CD4-positive, alpha-beta T cell (primary cell): ENCODE measurements at regions of chr6 and their contacts with region 1.

Region 1: GRCh38 chr6:4135665-4136353 is 434 bp upstream of the ECI2 start:
- DNase-seq: peak; percentile 90 to 99 (median 94)
- ATAC-seq: peak; percentile 87
- H3K4me3 ChIP-seq: peak overlapping the region; percentile 82
- H3K4me3 Mint-ChIP-seq: peak overlapping the region; percentile 86
- H3K27ac ChIP-seq: peak overlapping the region; percentile 47 to 62
- H3K27ac Mint-ChIP-seq: peak overlapping the region; percentile 97
- H3K4me1 ChIP-seq: peaks cover 22% of the 10 kb centered on the region
- H3K4me1 Mint-ChIP-seq: peaks cover 50% of the 10 kb centered on the region
- H3K27me3 ChIP-seq: no peaks in the 10 kb centered on the region
- H3K27me3 Mint-ChIP-seq: no peaks in the 10 kb centered on the region
- CTCF ChIP-seq: no peak

Region 2: GRCh38 chr6:2245094-2245876 is 1890.5 kb before region 1 on chr6 and contains the start of gene GMDS:
- CTCF ChIA-PET with region 1: no interaction called
- POLR2A ChIA-PET with region 1: no interaction called
- intact Hi-C with region 1: loop called in 1 of 2 experiments (anchors 10 kb)
- DNase-seq: peak; percentile 60 to 95 (median 78)
- ATAC-seq: peak; percentile 88
- H3K4me3 ChIP-seq: peak within 1 kb of the TSS; percentile 97
- H3K4me3 Mint-ChIP-seq: peak within 1 kb of the TSS; percentile 94
- H3K27ac ChIP-seq: peak within 1 kb of the TSS; percentile 50 to 88
- H3K27ac Mint-ChIP-seq: peak within 1 kb of the TSS; percentile 96
- H3K4me1 ChIP-seq: peaks cover 29% of the 10 kb centered on the region
- H3K4me1 Mint-ChIP-seq: peaks cover 69% of the 10 kb centered on the region
- H3K27me3 ChIP-seq: no peaks in the 10 kb centered on the region
- H3K27me3 Mint-ChIP-seq: no peaks in the 10 kb centered on the region
- CTCF ChIP-seq: no peak
- total RNA-seq, gene GMDS: 13.9 to 16.4 TPM

Region 3: DNA sequence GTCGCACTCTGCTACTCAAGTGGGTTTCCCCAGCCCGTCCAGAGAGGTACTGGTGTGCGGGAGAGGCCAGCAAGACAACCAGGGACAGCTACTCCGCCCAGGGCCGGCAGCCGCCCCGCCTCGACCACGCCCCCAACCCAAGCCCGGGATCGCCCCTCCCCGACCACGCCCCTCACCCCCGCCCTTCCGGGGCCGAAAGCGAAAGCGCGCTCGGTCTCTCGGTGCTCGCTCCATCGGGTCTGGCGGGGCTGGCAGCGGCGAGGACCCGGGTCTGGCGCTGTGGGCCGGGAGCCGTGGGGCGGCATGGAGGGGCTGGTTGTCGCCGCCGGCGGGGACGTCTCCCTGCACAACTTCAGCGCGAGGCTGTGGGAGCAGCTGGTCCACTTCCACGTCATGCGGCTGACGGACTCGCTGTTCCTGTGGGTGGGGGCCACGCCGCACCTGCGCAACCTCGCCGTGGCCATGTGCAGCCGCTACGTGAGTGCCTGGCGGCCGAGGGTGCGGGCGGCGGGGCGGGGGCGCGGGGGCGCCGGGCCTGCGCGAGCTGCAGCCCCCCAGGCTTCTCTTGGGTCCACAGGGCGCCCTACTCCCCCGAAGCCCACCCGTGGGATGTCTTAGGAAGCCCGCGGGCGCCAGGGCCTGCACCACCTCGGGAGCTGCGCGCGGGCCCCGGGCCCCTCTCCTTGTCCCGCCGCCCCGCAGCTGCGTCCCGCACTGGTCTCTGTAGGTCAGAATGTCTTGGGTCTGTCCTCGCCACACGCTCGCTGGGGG is 876.9 kb before region 1 on chr6 and contains the start of gene PSMG4:
- CTCF ChIA-PET with region 1: no interaction called
- POLR2A ChIA-PET with region 1: interaction called, 3 read pairs
- intact Hi-C with region 1: loop called (anchors 2 to 10 kb)
- DNase-seq: peak; percentile 83 to 96 (median 92)
- ATAC-seq: peak; percentile 74
- H3K4me3 ChIP-seq: peak within 1 kb of the TSS; percentile 80
- H3K4me3 Mint-ChIP-seq: peak within 1 kb of the TSS; percentile 96
- H3K27ac ChIP-seq: peak within 1 kb of the TSS in 1 of 2 donors; percentile 50
- H3K27ac Mint-ChIP-seq: peak within 1 kb of the TSS; percentile 92
- H3K4me1 ChIP-seq: peaks cover 45% of the 10 kb centered on the region
- H3K4me1 Mint-ChIP-seq: peaks cover 42% of the 10 kb centered on the region
- H3K27me3 ChIP-seq: no peaks in the 10 kb centered on the region
- H3K27me3 Mint-ChIP-seq: no peaks in the 10 kb centered on the region
- CTCF ChIP-seq: no peak
- total RNA-seq, gene PSMG4: 12.3 to 12.8 TPM

Region 4: GRCh38 chr6:3356056-3356761 is 779.6 kb before region 1 on chr6:
- CTCF ChIA-PET with region 1: no interaction called
- POLR2A ChIA-PET with region 1: no interaction called
- intact Hi-C with region 1: loop called (anchors 5 to 10 kb)
- DNase-seq: peak; percentile 36 to 87 (median 58)
- ATAC-seq: peak; percentile 78
- H3K4me3 ChIP-seq: peak overlapping the region; percentile 50
- H3K4me3 Mint-ChIP-seq: peak overlapping the region; percentile 85
- H3K27ac ChIP-seq: peak overlapping the region; percentile 67 to 71
- H3K27ac Mint-ChIP-seq: peak overlapping the region; percentile 94
- H3K4me1 ChIP-seq: peaks cover 33% of the 10 kb centered on the region
- H3K4me1 Mint-ChIP-seq: peaks cover 47% of the 10 kb centered on the region
- H3K27me3 ChIP-seq: no peaks in the 10 kb centered on the region
- H3K27me3 Mint-ChIP-seq: no peaks in the 10 kb centered on the region
- CTCF ChIP-seq: no peak

Region 5: DNA sequence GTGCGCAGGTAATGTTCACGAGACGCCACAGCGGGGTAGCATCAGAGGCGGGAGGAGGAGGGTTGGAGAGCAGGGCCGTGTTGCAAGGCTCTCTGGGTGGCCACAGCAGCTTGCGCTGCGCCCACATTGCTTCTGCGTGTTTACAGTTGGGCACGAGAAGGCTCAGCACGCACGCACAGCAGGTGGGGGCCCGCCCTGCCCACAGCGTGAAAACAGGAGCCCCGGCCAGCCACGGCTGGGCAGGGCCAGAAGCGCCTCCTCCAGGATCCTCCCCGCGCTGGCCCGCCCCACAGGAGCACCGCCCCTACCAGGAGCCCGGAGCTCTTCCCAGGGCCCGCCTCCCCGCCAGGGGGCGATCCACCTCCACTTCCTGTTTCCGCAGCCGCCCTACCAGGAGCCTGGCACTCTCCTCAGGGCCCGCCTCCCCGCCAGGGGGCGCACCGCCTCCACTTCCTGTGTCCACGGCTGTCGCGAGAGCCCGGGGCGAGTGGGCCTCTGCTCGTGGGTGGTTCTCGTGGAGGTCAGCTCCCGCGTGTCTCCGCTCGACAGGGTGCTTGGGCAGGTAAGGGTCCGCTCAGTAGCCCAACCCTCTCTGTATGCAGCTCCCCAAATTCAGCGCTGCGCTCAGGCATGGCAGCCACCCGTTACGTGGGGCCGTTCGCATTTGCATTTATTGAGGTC is 286.7 kb before region 1 on chr6 and contains the start of gene FAM50B:
- CTCF ChIA-PET with region 1: interaction called, 3 read pairs
- POLR2A ChIA-PET with region 1: interaction called, 12 read pairs
- intact Hi-C with region 1: loop called in 1 of 2 experiments (anchors 10 kb)
- DNase-seq: peak; percentile 84 to 96 (median 91)
- ATAC-seq: peak; percentile 94
- H3K4me3 ChIP-seq: peak within 1 kb of the TSS; percentile 74
- H3K4me3 Mint-ChIP-seq: peak within 1 kb of the TSS; percentile 78
- H3K27ac ChIP-seq: peak within 1 kb of the TSS in 1 of 2 donors; percentile 58
- H3K27ac Mint-ChIP-seq: peak within 1 kb of the TSS; percentile 83
- H3K4me1 ChIP-seq: peaks cover 34% of the 10 kb centered on the region
- H3K4me1 Mint-ChIP-seq: peaks cover 20% of the 10 kb centered on the region
- H3K27me3 ChIP-seq: no peaks in the 10 kb centered on the region
- H3K27me3 Mint-ChIP-seq: no peaks in the 10 kb centered on the region
- CTCF ChIP-seq: peak; percentile 89
- total RNA-seq, gene FAM50B: 2.7 to 2.8 TPM

Region 6: GRCh38 chr6:4155848-4156466 is 20.1 kb after region 1 on chr6:
- CTCF ChIA-PET with region 1: interaction called, 25 read pairs
- POLR2A ChIA-PET with region 1: interaction called, 4 read pairs
- intact Hi-C with region 1: loop called in 1 of 2 experiments (anchors 2 kb)
- DNase-seq: peak; percentile 57 to 91 (median 72)
- ATAC-seq: peak; percentile 99
- H3K4me3 ChIP-seq: no peak overlapping the region
- H3K4me3 Mint-ChIP-seq: no peak overlapping the region
- H3K27ac ChIP-seq: no peak overlapping the region
- H3K27ac Mint-ChIP-seq: no peak overlapping the region
- H3K4me1 ChIP-seq: no peaks in the 10 kb centered on the region
- H3K4me1 Mint-ChIP-seq: peaks cover 5% of the 10 kb centered on the region
- H3K27me3 ChIP-seq: no peaks in the 10 kb centered on the region
- H3K27me3 Mint-ChIP-seq: peaks cover 15% of the 10 kb centered on the region
- CTCF ChIP-seq: peak; percentile 86

Region 7: DNA sequence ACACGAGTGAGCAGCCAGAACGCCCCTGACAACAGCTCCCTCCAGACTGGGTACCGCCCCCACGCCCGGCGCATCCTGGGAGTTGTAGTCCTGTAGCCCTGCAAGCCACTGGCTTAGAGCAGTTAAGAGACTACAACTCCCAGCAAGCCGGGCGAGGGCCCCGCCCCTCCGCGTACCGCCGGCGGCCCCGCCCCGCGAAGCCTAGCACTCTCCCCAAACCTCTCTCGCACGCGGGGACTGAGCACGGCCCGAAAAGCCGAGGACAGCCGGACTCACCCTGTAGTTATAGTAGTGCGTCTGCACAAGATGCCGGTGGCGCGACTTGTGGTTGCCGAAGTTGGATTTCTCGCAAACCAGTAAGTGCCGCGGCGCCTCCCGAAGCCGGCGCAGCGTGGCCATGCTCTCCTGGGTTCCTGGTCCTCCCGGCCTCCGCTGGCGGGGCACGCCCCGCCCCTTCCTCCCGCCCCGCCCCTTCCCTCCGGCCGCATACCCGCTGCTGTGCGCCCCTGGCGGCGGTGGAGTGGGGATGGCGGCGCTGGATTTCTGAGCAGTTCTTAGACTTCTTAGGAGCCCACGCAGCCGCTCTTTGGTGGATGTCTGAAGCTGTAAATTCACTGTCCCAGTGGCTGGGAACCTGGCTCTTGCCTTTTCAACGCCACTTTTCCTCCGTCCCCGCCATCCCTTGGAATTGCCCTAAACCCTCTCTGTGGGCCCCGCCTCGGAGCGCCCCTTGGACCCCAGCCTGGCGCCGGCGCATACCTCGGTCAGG is 868.0 kb after region 1 on chr6 and contains the start of gene RPP40:
- CTCF ChIA-PET with region 1: no interaction called
- POLR2A ChIA-PET with region 1: no interaction called
- intact Hi-C with region 1: loop called in 1 of 2 experiments (anchors 5 kb)
- DNase-seq: peak; percentile 95 to 100 (median 98)
- ATAC-seq: peak; percentile 92
- H3K4me3 ChIP-seq: peak within 1 kb of the TSS; percentile 81
- H3K4me3 Mint-ChIP-seq: peak within 1 kb of the TSS; percentile 90
- H3K27ac ChIP-seq: peak within 1 kb of the TSS; percentile 83
- H3K27ac Mint-ChIP-seq: peak within 1 kb of the TSS; percentile 91
- H3K4me1 ChIP-seq: peaks cover 15% of the 10 kb centered on the region
- H3K4me1 Mint-ChIP-seq: peaks cover 17% of the 10 kb centered on the region
- H3K27me3 ChIP-seq: no peaks in the 10 kb centered on the region
- H3K27me3 Mint-ChIP-seq: no peaks in the 10 kb centered on the region
- CTCF ChIP-seq: peak; percentile 77
- total RNA-seq, gene RPP40: 0.36 to 0.69 TPM